ENCODE measurements at regions of chr17 and their contacts with region 1.

Region 1: DNA sequence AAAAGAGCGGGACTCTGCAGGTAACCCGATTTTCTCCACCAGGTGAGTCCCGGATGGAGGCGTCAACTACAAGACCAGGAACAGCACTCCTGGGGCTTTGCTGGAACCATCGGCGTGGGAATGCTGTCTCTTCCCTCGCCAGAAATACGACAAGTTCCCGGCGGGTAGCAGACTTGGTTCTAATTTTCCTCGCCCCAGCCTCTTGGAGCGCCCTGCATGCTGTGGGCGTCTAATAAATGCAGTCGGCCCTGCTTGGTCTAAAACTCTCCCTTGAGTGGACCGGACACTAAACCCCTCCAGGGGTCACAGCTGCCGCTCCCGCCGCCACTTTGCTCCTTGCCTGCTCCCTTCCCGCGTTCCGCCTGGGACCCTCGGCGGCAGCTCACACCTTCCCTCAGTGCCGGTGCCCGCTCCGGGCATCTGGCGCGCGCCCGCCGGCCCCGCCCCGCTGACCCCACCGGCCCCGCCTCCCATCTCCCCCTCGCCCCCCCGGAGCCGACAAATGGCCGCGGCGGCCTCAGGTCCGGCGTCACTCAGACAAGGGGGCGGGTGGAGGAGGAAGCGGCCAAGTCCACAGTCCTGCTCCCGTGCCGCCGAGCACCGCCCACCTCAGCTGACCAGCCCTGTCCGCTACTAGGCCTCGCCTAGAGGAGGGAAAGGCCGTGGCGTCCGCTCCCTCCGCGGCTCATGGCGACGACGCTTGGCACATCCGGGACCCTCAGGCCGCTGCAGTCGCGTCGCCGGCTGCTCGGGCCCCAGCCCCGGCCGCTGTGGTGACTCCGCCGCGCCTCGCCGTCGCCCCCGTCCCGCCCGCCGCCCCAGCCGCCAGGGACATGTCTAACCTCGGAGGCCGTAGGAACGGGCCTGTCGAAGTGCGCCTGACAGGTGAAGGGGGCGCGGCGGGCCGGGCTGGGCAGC is 65.8 kb downstream of the KPNA2 start:
- DNase-seq: peak; percentile 97 to 98
- ATAC-seq: peak; percentile 99 to 100 (median 100)
- H3K4me3 ChIP-seq: peak overlapping the region; percentile 76
- H3K27ac ChIP-seq: peak overlapping the region; percentile 95
- H3K4me1 ChIP-seq: peaks cover 17% of the 10 kb centered on the region
- H3K27me3 ChIP-seq: no peaks in the 10 kb centered on the region
- CTCF ChIP-seq: no peak

Region 2: GRCh38 chr17:67366193-67367157 is 734.9 kb before region 1 on chr17 and contains the start of gene PSMD12:
- intact Hi-C with region 1: loop called in 1 of 2 experiments (anchors 10 kb)
- DNase-seq: peak; percentile 95 to 97
- ATAC-seq: peak; percentile 93 to 98 (median 96)
- H3K4me3 ChIP-seq: peak within 1 kb of the TSS; percentile 81
- H3K27ac ChIP-seq: peak within 1 kb of the TSS; percentile 97
- H3K4me1 ChIP-seq: peaks cover 34% of the 10 kb centered on the region
- H3K27me3 ChIP-seq: no peaks in the 10 kb centered on the region
- CTCF ChIP-seq: no peak
- total RNA-seq, gene PSMD12: 66.6 to 161 (median 111) TPM

Region 3: DNA sequence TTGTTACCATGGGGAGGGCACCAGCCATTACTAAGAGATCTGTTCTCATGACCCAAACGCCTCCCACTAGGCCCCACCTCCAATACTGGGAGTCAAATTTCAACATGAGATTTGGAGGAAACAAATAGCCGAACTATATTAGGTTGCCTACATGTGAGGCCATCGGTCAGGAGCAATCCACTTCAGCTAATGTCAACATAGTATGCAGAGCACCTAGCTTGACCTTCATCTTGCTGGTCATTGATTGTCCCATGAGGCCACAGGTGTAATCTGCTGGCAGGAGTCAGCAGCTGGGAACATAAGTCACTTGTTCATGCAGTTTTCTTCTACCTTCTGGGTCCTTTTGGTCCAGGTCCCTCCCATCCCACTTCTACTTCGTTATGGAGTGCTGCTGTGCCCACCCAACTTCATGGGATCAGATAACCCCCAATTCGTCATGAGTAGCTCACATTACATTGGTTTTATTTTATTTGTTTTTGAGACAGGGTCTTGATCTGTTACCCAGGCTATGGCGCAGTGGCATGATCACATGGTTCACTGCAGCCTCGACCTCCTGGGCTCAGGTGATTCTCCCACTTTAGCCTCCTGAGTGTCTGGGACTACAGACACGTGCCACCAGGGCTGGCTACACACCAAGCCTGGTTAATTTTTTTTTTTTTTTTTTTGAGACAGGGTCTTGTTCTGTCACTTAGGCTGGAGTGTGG is 71.7 kb before region 1 on chr17:
- intact Hi-C with region 1: no loop called
- DNase-seq: no peak
- ATAC-seq: no peak
- H3K4me3 ChIP-seq: no peak overlapping the region
- H3K27ac ChIP-seq: no peak overlapping the region
- H3K4me1 ChIP-seq: peaks cover 3% of the 10 kb centered on the region
- H3K27me3 ChIP-seq: no peaks in the 10 kb centered on the region
- CTCF ChIP-seq: no peak

Region 4: GRCh38 chr17:68124873-68125870 is 23.8 kb after region 1 on chr17:
- intact Hi-C with region 1: no loop called
- DNase-seq: no peak
- ATAC-seq: no peak
- H3K4me3 ChIP-seq: no peak overlapping the region
- H3K27ac ChIP-seq: no peak overlapping the region
- H3K4me1 ChIP-seq: peaks cover 2% of the 10 kb centered on the region
- H3K27me3 ChIP-seq: no peaks in the 10 kb centered on the region
- CTCF ChIP-seq: no peak

Measured in psoas muscle (tissue), 8 donors.